CD4-positive, alpha-beta T cell (primary cell): ENCODE measurements at regions of chr6 and their contacts with region 1.

Region 1: GRCh38 chr6:167056370-167056769 is 57.2 kb downstream of the CEP43 start:
- DNase-seq: peak in 5 of 14 experiments; percentile 23 to 81 (median 71)
- ATAC-seq: peak; percentile 87
- H3K4me3 ChIP-seq: no peak overlapping the region
- H3K4me3 Mint-ChIP-seq: peak overlapping the region; percentile 68
- H3K27ac ChIP-seq: no peak overlapping the region
- H3K27ac Mint-ChIP-seq: peak overlapping the region; percentile 84
- H3K4me1 ChIP-seq: peaks cover 49% of the 10 kb centered on the region
- H3K4me1 Mint-ChIP-seq: peaks cover 59% of the 10 kb centered on the region
- H3K27me3 ChIP-seq: no peaks in the 10 kb centered on the region
- H3K27me3 Mint-ChIP-seq: no peaks in the 10 kb centered on the region
- CTCF ChIP-seq: no peak

Region 2: DNA sequence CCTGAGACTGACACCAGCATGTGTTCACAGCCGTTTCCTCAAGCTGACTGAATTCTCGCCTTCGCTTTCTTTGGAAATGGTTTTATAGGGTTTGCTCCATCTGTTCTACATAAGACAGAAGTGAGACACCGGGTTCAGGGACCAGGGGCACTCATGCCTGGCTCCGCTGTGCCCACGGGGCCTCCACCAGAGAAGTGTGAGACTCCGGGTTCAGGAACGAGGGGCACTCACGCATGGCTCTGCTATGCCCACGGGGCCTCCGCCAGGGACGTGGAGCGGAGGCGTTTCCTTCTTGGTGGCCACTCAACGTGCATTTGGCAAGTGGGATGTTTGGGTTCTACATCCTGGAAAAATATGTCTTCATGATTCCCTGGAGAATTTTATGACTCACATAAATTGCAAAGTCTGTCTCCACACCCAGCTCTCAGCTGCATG is 206.6 kb before region 1 on chr6:
- CTCF ChIA-PET with region 1: no interaction called
- POLR2A ChIA-PET with region 1: no interaction called
- intact Hi-C with region 1: no loop called
- DNase-seq: no peak
- ATAC-seq: no peak
- H3K4me3 ChIP-seq: no peak overlapping the region
- H3K4me3 Mint-ChIP-seq: no peak overlapping the region
- H3K27ac ChIP-seq: no peak overlapping the region
- H3K27ac Mint-ChIP-seq: no peak overlapping the region
- H3K4me1 ChIP-seq: no peaks in the 10 kb centered on the region
- H3K4me1 Mint-ChIP-seq: no peaks in the 10 kb centered on the region
- H3K27me3 ChIP-seq: no peaks in the 10 kb centered on the region
- H3K27me3 Mint-ChIP-seq: no peaks in the 10 kb centered on the region
- CTCF ChIP-seq: no peak

Region 3: DNA sequence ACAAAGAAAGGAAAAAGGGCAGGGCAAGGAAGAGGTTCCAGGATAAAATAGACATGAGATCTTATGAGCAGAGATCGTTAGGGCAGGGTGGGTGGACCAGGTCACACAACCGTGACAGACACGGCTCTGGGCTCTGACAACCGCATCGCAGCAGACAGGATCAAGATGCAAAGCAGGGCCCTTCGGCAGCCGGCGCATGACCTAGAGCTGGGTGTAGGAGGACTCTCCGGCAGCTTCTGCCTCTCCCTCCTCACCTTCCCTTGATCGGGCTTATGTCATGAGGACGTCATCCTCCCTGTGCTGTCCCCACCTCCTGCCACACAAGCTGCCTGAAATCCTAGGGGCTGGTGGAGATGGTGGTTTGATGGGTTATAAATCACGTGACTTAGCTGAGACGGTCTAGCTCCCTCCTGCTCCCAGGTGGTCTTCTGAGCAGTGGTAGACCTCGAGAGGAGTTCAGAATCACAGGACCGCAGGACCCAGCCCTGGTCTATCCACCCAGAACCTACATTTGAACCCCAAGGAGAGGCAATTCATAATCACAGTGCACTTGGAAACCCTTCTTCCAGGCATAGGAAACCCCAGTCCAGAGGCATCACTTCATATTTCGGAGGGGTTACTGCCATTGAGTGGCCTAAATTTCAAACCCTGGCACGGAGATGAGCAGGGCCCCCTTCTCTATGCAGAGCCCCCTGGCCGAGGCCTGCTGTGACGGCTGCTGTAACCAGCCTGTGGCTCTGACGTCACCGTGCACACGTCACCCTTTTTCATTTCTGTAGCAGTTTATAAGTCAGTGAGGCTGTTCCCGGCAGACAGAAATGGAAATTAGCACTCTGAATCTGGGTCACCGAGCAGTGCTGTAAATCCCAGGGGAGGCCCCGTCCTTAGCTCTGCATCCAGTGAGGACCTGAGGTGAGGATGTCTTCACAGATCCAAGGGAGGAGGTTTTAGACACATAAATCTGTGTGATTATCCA is 57.9 kb after region 1 on chr6:
- CTCF ChIA-PET with region 1: no interaction called
- POLR2A ChIA-PET with region 1: interaction called, 6 read pairs
- intact Hi-C with region 1: loop called in 1 of 2 experiments (anchors 5 kb)
- DNase-seq: peak in 11 of 14 experiments; percentile 30 to 90 (median 53)
- ATAC-seq: peak; percentile 79
- H3K4me3 ChIP-seq: peak overlapping the region; percentile 55
- H3K4me3 Mint-ChIP-seq: peak overlapping the region; percentile 97
- H3K27ac ChIP-seq: peak overlapping the region; percentile 58 to 82
- H3K27ac Mint-ChIP-seq: peak overlapping the region; percentile 95
- H3K4me1 ChIP-seq: peaks cover 68% of the 10 kb centered on the region
- H3K4me1 Mint-ChIP-seq: peaks cover 58% of the 10 kb centered on the region
- H3K27me3 ChIP-seq: no peaks in the 10 kb centered on the region
- H3K27me3 Mint-ChIP-seq: no peaks in the 10 kb centered on the region
- CTCF ChIP-seq: no peak

Region 4: DNA sequence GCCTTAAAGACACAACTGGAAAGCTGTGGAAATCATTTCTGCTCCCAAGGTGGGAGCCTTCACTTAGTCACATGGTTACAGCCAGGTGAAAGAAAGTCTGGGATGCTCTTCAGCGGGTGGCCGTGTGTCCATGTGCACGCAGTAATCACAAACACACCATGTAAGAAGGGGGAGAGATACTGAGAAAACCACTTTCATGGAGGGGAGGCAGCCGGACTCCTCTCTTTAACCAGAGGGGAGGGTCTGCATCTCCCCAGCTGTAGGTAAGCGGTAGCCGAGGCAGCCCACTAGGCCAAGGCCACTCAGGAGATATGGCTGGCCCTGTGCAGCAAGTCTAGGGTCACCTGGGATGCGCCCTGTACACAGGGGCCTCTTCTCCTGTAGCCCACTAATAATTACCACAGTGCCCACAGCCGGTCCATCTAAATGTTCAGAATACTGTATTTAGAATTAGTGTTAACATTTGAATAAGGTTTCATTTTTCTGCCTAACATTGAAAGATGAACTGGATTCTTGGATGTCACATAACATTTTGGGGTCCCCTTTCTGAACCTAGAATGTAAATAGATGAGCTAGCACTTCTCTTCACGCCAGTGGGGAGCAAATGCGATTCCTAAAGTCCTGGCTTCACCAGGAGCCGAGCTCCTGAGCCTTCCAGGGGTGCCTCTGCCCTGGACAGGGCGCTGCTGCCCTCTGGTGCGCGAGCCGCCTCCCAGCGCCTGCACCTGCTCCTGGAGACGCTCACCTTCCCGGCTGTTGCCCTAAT is 85.5 kb after region 1 on chr6:
- CTCF ChIA-PET with region 1: no interaction called
- POLR2A ChIA-PET with region 1: no interaction called
- intact Hi-C with region 1: no loop called
- DNase-seq: peak; percentile 14 to 79 (median 54)
- ATAC-seq: peak; percentile 84
- H3K4me3 ChIP-seq: no peak overlapping the region
- H3K4me3 Mint-ChIP-seq: no peak overlapping the region
- H3K27ac ChIP-seq: no peak overlapping the region
- H3K27ac Mint-ChIP-seq: peak overlapping the region; percentile 12
- H3K4me1 ChIP-seq: peaks cover 19% of the 10 kb centered on the region
- H3K4me1 Mint-ChIP-seq: peaks cover 41% of the 10 kb centered on the region
- H3K27me3 ChIP-seq: no peaks in the 10 kb centered on the region
- H3K27me3 Mint-ChIP-seq: peaks cover 6% of the 10 kb centered on the region
- CTCF ChIP-seq: peak; percentile 90